RWPE1 (cell line): ENCODE measurements at regions of chr17 and their contacts with region 1.

Region 1: GRCh38 chr17:39730095-39730921 is at the start of gene MIEN1:
- DNase-seq: peak; percentile 94
- H3K27ac ChIP-seq: peak within 1 kb of the TSS; percentile 74
- CTCF ChIP-seq: peak; percentile 91

Region 2: GRCh38 chr17:39674925-39675726 is 55.2 kb before region 1 on chr17:
- CTCF ChIA-PET with region 1: no interaction called
- POLR2A ChIA-PET with region 1: no interaction called
- DNase-seq: no peak
- H3K27ac ChIP-seq: peak overlapping the region; percentile 17
- CTCF ChIP-seq: no peak

Region 3: DNA sequence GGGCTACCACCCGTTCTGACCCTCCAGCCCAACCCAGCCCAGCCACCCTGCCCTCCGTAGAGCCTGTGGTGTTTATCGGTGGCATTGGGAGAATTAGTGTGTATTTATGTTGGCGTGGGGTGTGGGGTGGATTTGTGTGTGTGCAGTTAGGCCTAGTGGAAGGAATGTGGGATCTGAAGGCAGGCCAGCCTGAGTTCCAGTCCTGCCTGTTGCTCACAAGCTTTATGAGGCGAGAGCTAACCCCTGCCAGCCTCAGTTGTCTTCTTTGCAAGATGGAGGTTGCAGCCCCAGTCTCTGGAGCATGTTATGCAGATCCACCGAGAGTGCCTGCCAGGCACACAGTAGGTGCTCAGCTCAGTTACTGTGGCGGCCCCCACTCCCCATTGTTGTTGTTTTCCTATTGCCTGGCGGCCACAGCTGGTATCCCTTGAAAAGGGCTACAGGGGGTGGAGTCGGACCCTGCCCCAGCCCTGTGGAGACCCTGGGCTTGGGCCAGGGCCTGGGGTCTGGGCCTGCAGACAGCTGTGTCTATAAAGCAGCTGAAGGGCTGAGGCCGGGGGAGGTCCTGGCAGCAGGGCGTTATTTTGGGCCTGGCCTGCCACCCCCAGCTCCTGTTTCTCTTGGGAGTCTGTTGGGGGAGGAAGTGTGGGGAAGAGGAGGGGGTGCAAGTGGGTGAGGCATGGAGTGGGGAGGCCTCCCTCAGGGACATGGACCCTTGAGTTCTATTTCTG is 25.3 kb before region 1 on chr17:
- CTCF ChIA-PET with region 1: interaction called, 11 read pairs
- POLR2A ChIA-PET with region 1: interaction called, 3 read pairs
- DNase-seq: no peak
- H3K27ac ChIP-seq: peak overlapping the region; percentile 60
- CTCF ChIP-seq: no peak

Region 4: DNA sequence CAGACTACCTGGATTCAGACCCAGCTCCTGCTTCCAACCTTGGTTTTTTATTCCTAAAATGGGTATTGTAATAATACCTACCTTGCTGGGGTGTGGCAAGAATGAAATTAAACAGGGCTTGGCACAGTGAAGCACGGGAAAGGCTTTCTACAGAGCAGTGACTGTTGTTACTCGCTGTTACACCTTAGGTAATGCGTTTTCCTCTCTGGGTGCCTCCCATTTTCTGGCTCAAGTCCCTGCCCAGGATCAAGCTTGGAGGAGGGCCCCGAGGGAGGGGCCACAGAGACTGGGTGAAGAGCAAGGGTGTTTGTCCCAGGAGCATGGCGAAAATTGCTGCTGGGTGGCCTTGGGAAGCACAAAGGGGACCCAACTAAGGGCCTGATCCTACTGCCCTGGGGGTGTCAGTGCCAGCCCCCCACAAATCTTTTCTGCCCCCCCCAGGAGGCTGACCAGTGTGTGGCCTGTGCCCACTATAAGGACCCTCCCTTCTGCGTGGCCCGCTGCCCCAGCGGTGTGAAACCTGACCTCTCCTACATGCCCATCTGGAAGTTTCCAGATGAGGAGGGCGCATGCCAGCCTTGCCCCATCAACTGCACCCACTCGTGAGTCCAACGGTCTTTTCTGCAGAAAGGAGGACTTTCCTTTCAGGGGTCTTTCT is 13.3 kb before region 1 on chr17:
- CTCF ChIA-PET with region 1: interaction called, 11 read pairs
- POLR2A ChIA-PET with region 1: no interaction called
- DNase-seq: no peak
- H3K27ac ChIP-seq: peak overlapping the region; percentile 68
- CTCF ChIP-seq: no peak